Activated CD4-positive, alpha-beta T cell treated with anti-CD3 and anti-CD28 coated beads, Interleukin-2, amount 10 ng/mL, durations not matched to agents 24 days and 14 days (primary cell): ENCODE measurements at regions of chr11 and their contacts with region 1.

Region 1: DNA sequence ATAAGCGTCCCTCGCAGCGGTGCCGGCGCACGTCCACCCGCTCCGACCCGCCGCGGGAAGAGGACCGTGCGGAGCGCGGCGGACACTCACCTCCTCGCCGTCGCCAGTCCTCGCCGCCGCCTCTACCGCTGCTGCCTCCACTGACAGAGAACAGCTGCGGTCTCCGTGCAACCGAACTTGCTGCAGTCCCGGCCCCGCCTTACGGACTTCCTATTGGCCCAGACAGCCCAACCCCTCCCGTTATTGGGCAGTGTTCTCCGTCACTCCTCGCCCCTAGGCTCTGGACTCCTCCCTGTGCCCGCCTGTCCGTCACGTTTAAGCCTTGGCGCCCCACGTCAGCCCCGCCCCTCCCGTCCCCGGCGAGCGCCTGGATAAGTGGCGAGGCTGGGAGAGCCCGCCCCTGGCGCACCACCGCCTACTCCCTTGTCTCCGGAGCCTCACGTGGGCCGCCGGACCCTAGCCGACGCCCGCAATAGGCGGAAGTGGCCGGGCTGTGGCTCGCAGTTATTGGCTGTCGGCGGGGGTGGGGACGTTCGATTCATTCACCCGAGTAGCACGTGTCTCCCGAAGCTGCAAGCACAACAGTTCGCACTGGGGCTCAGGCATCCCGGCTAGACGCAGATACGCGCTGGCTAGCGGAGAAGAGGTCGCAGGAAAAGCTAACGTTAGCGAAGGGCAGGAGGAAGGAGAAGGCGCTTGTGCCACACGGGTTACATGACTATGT is at the start of gene PC:
- DNase-seq: peak; percentile 99
- H3K4me3 Mint-ChIP-seq: peak within 1 kb of the TSS; percentile 85
- H3K27ac Mint-ChIP-seq: peak within 1 kb of the TSS; percentile 94
- H3K4me1 Mint-ChIP-seq: peaks cover 20% of the 10 kb centered on the region
- H3K27me3 Mint-ChIP-seq: no peaks in the 10 kb centered on the region
- total RNA-seq, gene PC: 13.1 and 15.7 TPM in 2 replicates

Region 2: GRCh38 chr11:66933508-66933907 is 24.9 kb before region 1 on chr11:
- intact Hi-C with region 1: no loop called
- DNase-seq: no peak
- H3K4me3 Mint-ChIP-seq: no peak overlapping the region
- H3K27ac Mint-ChIP-seq: no peak overlapping the region
- H3K4me1 Mint-ChIP-seq: no peaks in the 10 kb centered on the region
- H3K27me3 Mint-ChIP-seq: peaks cover 5% of the 10 kb centered on the region

Region 3: GRCh38 chr11:67022328-67022927 is 64.0 kb after region 1 on chr11:
- intact Hi-C with region 1: loop called (anchors 5 kb)
- DNase-seq: no peak
- H3K4me3 Mint-ChIP-seq: no peak overlapping the region
- H3K27ac Mint-ChIP-seq: no peak overlapping the region
- H3K4me1 Mint-ChIP-seq: peaks cover 14% of the 10 kb centered on the region
- H3K27me3 Mint-ChIP-seq: peaks cover 58% of the 10 kb centered on the region

Region 4: DNA sequence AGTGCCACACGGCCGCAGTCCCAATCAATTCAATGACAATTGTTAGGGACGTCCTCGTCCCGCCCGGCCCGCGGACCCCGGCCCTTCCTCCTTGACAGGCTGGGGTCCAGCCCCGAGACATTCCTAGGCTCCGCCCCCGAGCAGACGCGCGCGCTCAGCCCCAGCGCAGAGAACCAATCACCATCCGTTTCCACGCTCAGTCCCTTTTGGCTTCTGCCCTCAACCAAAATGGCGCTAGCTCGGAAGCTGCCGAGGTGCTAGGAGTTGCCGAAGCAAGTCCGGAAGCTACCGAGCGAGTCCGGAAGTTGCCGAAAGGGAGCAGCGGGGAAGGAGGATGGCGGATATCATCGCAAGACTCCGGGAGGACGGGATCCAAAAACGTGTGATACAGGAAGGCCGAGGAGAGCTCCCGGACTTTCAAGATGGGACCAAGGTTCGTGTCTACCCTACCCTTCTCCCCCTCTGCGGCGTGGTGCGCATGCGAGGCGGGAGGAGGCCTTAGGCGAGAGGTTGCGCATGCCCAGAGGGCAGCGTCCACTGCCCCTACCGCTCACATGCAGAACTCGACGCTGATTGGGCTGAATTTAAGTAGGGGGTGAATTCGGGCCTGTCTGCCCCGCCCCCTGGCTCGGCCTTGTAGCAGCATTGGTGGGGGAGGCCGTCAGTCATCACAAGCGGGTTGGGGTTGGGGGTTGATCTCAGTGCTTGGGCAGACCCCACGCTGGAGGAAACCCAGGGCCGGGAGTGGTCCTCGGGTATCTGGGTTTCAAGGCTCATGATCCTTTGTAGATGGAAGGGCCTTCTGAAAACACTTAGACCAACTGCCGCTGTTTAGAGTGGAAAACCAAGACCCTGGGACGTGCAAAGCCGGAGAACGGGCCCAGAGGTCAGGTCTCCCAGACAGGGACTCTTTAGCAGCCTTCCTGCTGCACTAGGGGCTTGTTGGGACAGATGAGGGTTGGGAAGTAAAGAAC is 524.7 kb after region 1 on chr11 and contains the start of gene AIP:
- intact Hi-C with region 1: loop called (anchors 10 kb)
- DNase-seq: peak; percentile 99
- H3K4me3 Mint-ChIP-seq: peak within 1 kb of the TSS; percentile 96
- H3K27ac Mint-ChIP-seq: peak within 1 kb of the TSS; percentile 99
- H3K4me1 Mint-ChIP-seq: peaks cover 47% of the 10 kb centered on the region
- H3K27me3 Mint-ChIP-seq: peaks cover 5% of the 10 kb centered on the region
- total RNA-seq, gene AIP: 186 and 189 TPM in 2 replicates